ENCODE measurements at regions of chr4 and their contacts with region 1.

Region 1: GRCh38 chr4:26330186-26330787 is 9.5 kb downstream of the RBPJ start:
- DNase-seq: peak in 4 of 5 donors; percentile 53 to 61 (median 56)
- H3K4me3 ChIP-seq: no peak overlapping the region
- H3K4me3 Mint-ChIP-seq: peak overlapping the region in 4 of 8 donors; percentile 8 to 48 (median 38)
- H3K27ac ChIP-seq: no peak overlapping the region
- H3K27ac Mint-ChIP-seq: peak overlapping the region in 2 of 7 donors; percentile 44 to 78
- H3K4me1 ChIP-seq: peaks cover 24% of the 10 kb centered on the region
- H3K4me1 Mint-ChIP-seq: peaks cover 37 to 46% (median 42%) of the 10 kb centered on the region in 4 donors
- H3K27me3 ChIP-seq: no peaks in the 10 kb centered on the region
- H3K27me3 Mint-ChIP-seq: no peaks in the 10 kb centered on the region

Region 2: DNA sequence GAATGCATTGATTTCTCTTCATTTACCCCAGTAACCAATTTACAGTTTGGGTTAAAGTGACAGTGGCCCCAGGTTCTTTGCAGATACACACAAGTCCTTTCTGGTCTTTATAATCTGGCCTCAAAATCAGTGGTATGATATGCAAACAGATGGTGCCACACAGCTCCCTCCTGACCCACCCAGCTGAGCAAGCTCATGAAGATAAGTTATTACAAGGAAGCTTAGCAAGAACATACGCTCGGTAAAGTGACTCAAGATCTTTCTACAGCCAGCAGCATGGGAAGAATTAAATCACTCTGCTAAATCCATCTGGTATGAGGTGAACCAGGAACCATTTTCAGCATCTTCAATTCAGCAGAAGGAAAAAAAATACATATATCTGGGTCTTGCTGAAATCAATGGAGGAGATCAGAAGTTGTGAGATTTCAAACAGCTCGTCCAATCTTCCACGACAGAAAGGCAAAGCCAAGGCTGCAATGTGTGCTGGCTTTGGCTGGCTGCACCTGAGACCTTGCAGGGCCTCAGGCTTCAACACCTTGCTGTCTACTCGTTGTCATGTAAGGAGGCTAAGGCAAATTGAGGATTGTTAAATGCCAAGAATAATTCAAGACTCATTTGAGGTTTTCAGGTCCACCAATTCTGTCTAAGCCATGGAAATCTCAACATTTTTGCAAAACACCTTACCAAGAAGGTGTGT is 495.7 kb before region 1 on chr4:
- CTCF ChIA-PET with region 1: no interaction called
- POLR2A ChIA-PET with region 1: no interaction called
- intact Hi-C with region 1: no loop called
- DNase-seq: no peak
- H3K4me3 ChIP-seq: no peak overlapping the region
- H3K4me3 Mint-ChIP-seq: no peak overlapping the region
- H3K27ac ChIP-seq: no peak overlapping the region
- H3K27ac Mint-ChIP-seq: peak overlapping the region in 2 of 7 donors; percentile 54 to 70
- H3K4me1 ChIP-seq: no peaks in the 10 kb centered on the region
- H3K4me1 Mint-ChIP-seq: peaks cover 18 to 45% (median 25%) of the 10 kb centered on the region in 4 donors
- H3K27me3 ChIP-seq: no peaks in the 10 kb centered on the region
- H3K27me3 Mint-ChIP-seq: no peaks in the 10 kb centered on the region

Region 3: GRCh38 chr4:25986807-25987206 is 343.5 kb before region 1 on chr4:
- CTCF ChIA-PET with region 1: interaction called, 85 read pairs
- POLR2A ChIA-PET with region 1: no interaction called
- intact Hi-C with region 1: loop called (anchors 1 kb)
- DNase-seq: no peak
- H3K4me3 ChIP-seq: no peak overlapping the region
- H3K4me3 Mint-ChIP-seq: no peak overlapping the region
- H3K27ac ChIP-seq: no peak overlapping the region
- H3K27ac Mint-ChIP-seq: peak overlapping the region in 1 of 7 donors; percentile 48
- H3K4me1 ChIP-seq: peaks cover 6% of the 10 kb centered on the region
- H3K4me1 Mint-ChIP-seq: peaks cover 4 to 13% (median 6%) of the 10 kb centered on the region in 4 donors
- H3K27me3 ChIP-seq: no peaks in the 10 kb centered on the region
- H3K27me3 Mint-ChIP-seq: no peaks in the 10 kb centered on the region

Region 4: DNA sequence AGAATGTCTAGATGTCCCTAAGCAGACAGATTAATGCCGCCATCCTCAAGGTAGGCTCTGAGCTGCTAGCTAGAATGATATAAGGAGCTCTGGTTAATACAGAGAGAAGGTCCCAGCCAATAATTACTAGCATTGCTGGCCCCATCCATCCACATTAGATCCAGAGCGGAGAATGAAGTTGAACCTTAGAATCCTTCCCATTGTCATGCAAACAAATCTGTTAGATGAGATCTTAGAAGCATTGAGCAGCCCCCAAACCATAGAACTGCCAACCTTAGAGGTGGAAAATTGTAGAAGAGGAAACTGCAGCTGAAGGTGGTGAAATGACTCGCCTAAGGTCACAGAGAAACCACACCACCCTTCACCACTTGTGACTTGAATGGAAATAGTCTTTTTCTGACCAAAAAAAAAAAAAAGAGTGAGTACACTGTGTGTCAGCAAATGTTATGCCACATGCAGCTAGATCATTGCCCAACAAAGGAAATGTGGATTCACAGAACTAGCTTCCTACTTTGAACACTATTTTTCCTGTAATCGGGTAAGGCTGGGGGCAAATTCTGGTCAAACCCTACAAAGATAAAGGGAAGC is 254.2 kb before region 1 on chr4:
- CTCF ChIA-PET with region 1: interaction called, 223 read pairs
- POLR2A ChIA-PET with region 1: interaction called, 3 read pairs
- intact Hi-C with region 1: no loop called
- DNase-seq: peak in 1 of 5 donors; percentile 9
- H3K4me3 ChIP-seq: no peak overlapping the region
- H3K4me3 Mint-ChIP-seq: no peak overlapping the region
- H3K27ac ChIP-seq: no peak overlapping the region
- H3K27ac Mint-ChIP-seq: peak overlapping the region; percentile 9 to 80 (median 32)
- H3K4me1 ChIP-seq: peaks cover 31% of the 10 kb centered on the region
- H3K4me1 Mint-ChIP-seq: peaks cover 26 to 46% (median 34%) of the 10 kb centered on the region in 4 donors
- H3K27me3 ChIP-seq: no peaks in the 10 kb centered on the region
- H3K27me3 Mint-ChIP-seq: no peaks in the 10 kb centered on the region

Region 5: GRCh38 chr4:26263165-26263564 is 67.1 kb before region 1 on chr4:
- CTCF ChIA-PET with region 1: no interaction called
- POLR2A ChIA-PET with region 1: no interaction called
- intact Hi-C with region 1: no loop called
- DNase-seq: no peak
- H3K4me3 ChIP-seq: no peak overlapping the region
- H3K4me3 Mint-ChIP-seq: no peak overlapping the region
- H3K27ac ChIP-seq: no peak overlapping the region
- H3K27ac Mint-ChIP-seq: no peak overlapping the region
- H3K4me1 ChIP-seq: no peaks in the 10 kb centered on the region
- H3K4me1 Mint-ChIP-seq: no peaks in the 10 kb centered on the region
- H3K27me3 ChIP-seq: no peaks in the 10 kb centered on the region
- H3K27me3 Mint-ChIP-seq: peaks cover 0 to under 1% of the 10 kb centered on the region in 2 donors

Region 6: GRCh38 chr4:26319467-26319948 is 10.8 kb before region 1 on chr4:
- CTCF ChIA-PET with region 1: interaction called, 33 read pairs
- POLR2A ChIA-PET with region 1: interaction called, 5 read pairs
- intact Hi-C with region 1: no loop called
- DNase-seq: peak; percentile 96 to 98 (median 96)
- H3K4me3 ChIP-seq: peak overlapping the region; percentile 86
- H3K4me3 Mint-ChIP-seq: peak overlapping the region; percentile 96 to 100 (median 97)
- H3K27ac ChIP-seq: peak overlapping the region; percentile 97
- H3K27ac Mint-ChIP-seq: peak overlapping the region; percentile 98 to 99 (median 99)
- H3K4me1 ChIP-seq: peaks cover 32% of the 10 kb centered on the region
- H3K4me1 Mint-ChIP-seq: peaks cover 21 to 55% (median 32%) of the 10 kb centered on the region in 4 donors
- H3K27me3 ChIP-seq: no peaks in the 10 kb centered on the region
- H3K27me3 Mint-ChIP-seq: peaks cover 0 to 2% of the 10 kb centered on the region in 2 donors

Region 7: DNA sequence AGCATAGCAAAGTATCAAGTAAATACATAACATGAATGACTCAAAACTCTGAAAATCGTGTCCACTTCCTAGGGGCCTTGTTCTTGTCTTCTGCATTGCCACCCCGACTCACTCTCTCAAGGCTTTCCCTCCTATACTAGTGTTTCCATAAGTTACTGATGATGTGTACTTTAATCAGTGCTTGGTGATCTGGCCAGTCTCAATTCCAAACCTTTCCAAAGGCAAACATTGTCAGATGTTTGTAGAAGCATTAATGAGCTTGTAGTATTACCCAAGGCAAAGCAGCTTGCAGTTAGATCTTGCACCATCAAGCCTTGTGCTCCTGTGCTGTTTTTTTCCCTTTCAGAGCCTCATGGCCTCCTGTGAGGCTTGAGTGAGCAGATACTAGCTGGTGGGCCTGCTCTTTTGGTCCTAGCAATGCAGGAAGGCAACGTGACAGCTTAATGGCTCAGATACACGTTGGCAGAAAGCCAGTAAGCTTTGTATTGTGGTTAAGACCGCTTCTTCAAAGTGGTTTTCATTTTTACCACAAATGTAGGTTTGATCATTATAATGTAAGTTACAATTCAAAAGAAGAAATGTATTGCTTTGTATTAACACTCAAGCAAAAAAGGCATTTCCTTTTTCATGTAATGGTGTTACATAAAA is 42.4 kb after region 1 on chr4:
- CTCF ChIA-PET with region 1: interaction called, 6 read pairs
- POLR2A ChIA-PET with region 1: interaction called, 3 read pairs
- intact Hi-C with region 1: loop called (anchors 5 kb)
- DNase-seq: peak; percentile 70 to 77 (median 73)
- H3K4me3 ChIP-seq: no peak overlapping the region
- H3K4me3 Mint-ChIP-seq: peak overlapping the region in 6 of 8 donors; percentile 11 to 73 (median 41)
- H3K27ac ChIP-seq: no peak overlapping the region
- H3K27ac Mint-ChIP-seq: peak overlapping the region in 4 of 7 donors; percentile 19 to 65 (median 44)
- H3K4me1 ChIP-seq: peaks cover 30% of the 10 kb centered on the region
- H3K4me1 Mint-ChIP-seq: peaks cover 29 to 63% (median 38%) of the 10 kb centered on the region in 4 donors
- H3K27me3 ChIP-seq: no peaks in the 10 kb centered on the region
- H3K27me3 Mint-ChIP-seq: no peaks in the 10 kb centered on the region

Region 8: GRCh38 chr4:26484032-26484515 is 153.8 kb after region 1 on chr4:
- CTCF ChIA-PET with region 1: no interaction called
- POLR2A ChIA-PET with region 1: no interaction called
- intact Hi-C with region 1: no loop called
- DNase-seq: no peak
- H3K4me3 ChIP-seq: no peak overlapping the region
- H3K4me3 Mint-ChIP-seq: no peak overlapping the region
- H3K27ac ChIP-seq: no peak overlapping the region
- H3K27ac Mint-ChIP-seq: no peak overlapping the region
- H3K4me1 ChIP-seq: no peaks in the 10 kb centered on the region
- H3K4me1 Mint-ChIP-seq: no peaks in the 10 kb centered on the region
- H3K27me3 ChIP-seq: no peaks in the 10 kb centered on the region
- H3K27me3 Mint-ChIP-seq: peaks cover 3 to 6% of the 10 kb centered on the region in 2 donors

Region 9: GRCh38 chr4:27010334-27010940 is 680.1 kb after region 1 on chr4:
- CTCF ChIA-PET with region 1: interaction called, 6 read pairs
- POLR2A ChIA-PET with region 1: no interaction called
- intact Hi-C with region 1: loop called (anchors 1 kb)
- DNase-seq: peak; percentile 50 to 59 (median 57)
- H3K4me3 ChIP-seq: no peak overlapping the region
- H3K4me3 Mint-ChIP-seq: no peak overlapping the region
- H3K27ac ChIP-seq: no peak overlapping the region
- H3K27ac Mint-ChIP-seq: peak overlapping the region in 6 of 7 donors; percentile 4 to 69 (median 63)
- H3K4me1 ChIP-seq: no peaks in the 10 kb centered on the region
- H3K4me1 Mint-ChIP-seq: peaks cover 4 to 17% (median 11%) of the 10 kb centered on the region in 4 donors
- H3K27me3 ChIP-seq: no peaks in the 10 kb centered on the region
- H3K27me3 Mint-ChIP-seq: no peaks in the 10 kb centered on the region

Measured in CD4-positive, alpha-beta memory T cell (primary cell).